BJ (cell line): ENCODE measurements at regions of chr2 and their contacts with region 1.

Region 1: DNA sequence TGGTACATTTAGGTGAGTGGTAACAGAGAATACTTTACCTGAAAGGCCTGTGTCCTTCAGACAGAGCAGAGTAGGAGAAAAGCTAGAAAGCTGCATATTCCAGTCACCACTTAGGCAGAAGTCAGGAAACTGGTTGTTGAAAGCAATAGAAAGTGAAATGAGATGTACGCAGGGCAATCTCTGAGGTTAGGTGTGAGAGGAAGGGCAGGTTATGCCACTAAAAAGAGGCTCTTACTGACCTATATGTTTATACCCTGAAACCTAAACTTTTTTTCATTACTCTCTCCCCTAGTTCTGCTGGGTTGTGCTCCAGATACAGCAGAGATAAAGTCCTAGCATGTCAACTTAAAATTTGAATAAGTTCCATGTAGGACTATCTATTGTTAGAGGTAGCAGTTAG is 93.5 kb downstream of the COX7A2L start:
- DNase-seq: no peak
- H3K4me3 ChIP-seq: no peak overlapping the region
- H3K27me3 ChIP-seq: no peaks in the 10 kb centered on the region
- CTCF ChIP-seq: no peak

Region 2: GRCh38 chr2:42252464-42252863 is 15.1 kb before region 1 on chr2:
- CTCF ChIA-PET with region 1: interaction called, 3 read pairs
- POLR2A ChIA-PET with region 1: interaction called, 18 read pairs
- DNase-seq: no peak
- H3K4me3 ChIP-seq: no peak overlapping the region
- H3K27me3 ChIP-seq: no peaks in the 10 kb centered on the region
- CTCF ChIP-seq: no peak